A673 (cell line): ENCODE measurements at regions of chr20 and their contacts with region 1.

Region 1: DNA sequence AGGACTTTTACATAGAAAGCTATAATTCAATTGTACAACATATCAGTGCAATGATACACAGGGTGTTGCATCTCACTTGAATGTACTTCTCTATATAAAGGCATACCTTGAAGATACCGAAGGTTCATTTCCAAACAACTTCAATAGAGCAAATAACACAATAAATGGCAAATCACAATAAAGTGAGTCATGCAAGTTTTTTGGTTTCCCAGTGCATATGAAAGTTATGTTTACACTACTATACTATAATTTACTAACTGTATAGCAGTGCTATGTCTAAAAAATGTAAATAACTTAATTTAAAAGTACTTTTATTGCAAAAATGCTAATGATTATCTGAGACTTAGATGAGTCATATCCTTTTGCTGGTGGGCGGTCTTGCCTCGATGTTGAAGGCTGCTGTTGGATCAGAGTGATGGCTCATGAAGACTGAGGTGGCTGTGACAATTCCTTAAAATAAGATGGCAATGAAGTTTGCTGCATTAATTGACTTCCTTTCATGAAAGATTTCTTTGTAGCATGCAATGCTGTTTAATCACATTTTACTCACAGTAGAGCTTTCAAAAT is 188.8 kb downstream of the TASP1 start:
- DNase-seq: peak; percentile 91
- H3K4me3 ChIP-seq: no peak overlapping the region
- H3K27ac ChIP-seq: peak overlapping the region; percentile 51
- H3K4me1 ChIP-seq: peaks cover 17% of the 10 kb centered on the region
- H3K27me3 ChIP-seq: no peaks in the 10 kb centered on the region
- CTCF ChIP-seq: no peak

Region 2: GRCh38 chr20:13221673-13222318 is 228.2 kb before region 1 on chr20:
- CTCF ChIA-PET with region 1: no interaction called
- POLR2A ChIA-PET with region 1: no interaction called
- intact Hi-C with region 1: loop called (anchors 10 kb)
- DNase-seq: peak; percentile 77
- H3K4me3 ChIP-seq: peak overlapping the region; percentile 39
- H3K27ac ChIP-seq: no peak overlapping the region
- H3K4me1 ChIP-seq: peaks cover 7% of the 10 kb centered on the region
- H3K27me3 ChIP-seq: peaks cover 82% of the 10 kb centered on the region
- CTCF ChIP-seq: no peak

Region 3: GRCh38 chr20:13243826-13244376 is 206.1 kb before region 1 on chr20:
- CTCF ChIA-PET with region 1: no interaction called
- POLR2A ChIA-PET with region 1: no interaction called
- intact Hi-C with region 1: no loop called
- DNase-seq: no peak
- H3K4me3 ChIP-seq: no peak overlapping the region
- H3K27ac ChIP-seq: no peak overlapping the region
- H3K4me1 ChIP-seq: no peaks in the 10 kb centered on the region
- H3K27me3 ChIP-seq: peaks cover 10% of the 10 kb centered on the region
- CTCF ChIP-seq: no peak

Region 4: GRCh38 chr20:13384132-13384531 is 65.8 kb before region 1 on chr20:
- CTCF ChIA-PET with region 1: no interaction called
- POLR2A ChIA-PET with region 1: no interaction called
- intact Hi-C with region 1: loop called (anchors 10 kb)
- DNase-seq: no peak
- H3K4me3 ChIP-seq: no peak overlapping the region
- H3K27ac ChIP-seq: no peak overlapping the region
- H3K4me1 ChIP-seq: no peaks in the 10 kb centered on the region
- H3K27me3 ChIP-seq: no peaks in the 10 kb centered on the region
- CTCF ChIP-seq: no peak